ENCODE measurements at regions of chrX and their contacts with region 1.

Region 1: DNA sequence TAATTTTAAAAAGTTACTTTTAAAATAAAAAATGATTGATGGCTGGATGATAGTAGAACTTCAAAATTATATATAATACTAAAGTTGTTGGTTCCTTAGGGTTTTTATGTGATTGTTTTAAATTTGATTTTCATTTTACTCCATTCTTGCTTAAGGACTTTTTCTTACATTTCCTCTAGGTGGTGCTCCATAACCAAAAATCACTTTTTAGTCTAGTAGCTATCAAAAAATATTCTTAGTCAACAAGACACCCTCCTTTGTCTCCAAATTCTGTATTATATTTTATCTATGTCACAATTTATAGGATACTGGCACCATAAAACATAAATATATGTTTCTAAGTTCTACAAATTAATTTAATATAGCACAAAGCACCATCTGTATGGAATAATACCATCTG is 67.2 kb upstream of the BRWD3 start:
- DNase-seq: no peak
- H3K4me3 Mint-ChIP-seq: no peak overlapping the region
- H3K27ac Mint-ChIP-seq: no peak overlapping the region
- H3K4me1 Mint-ChIP-seq: no peaks in the 10 kb centered on the region
- H3K27me3 Mint-ChIP-seq: no peaks in the 10 kb centered on the region

Region 2: DNA sequence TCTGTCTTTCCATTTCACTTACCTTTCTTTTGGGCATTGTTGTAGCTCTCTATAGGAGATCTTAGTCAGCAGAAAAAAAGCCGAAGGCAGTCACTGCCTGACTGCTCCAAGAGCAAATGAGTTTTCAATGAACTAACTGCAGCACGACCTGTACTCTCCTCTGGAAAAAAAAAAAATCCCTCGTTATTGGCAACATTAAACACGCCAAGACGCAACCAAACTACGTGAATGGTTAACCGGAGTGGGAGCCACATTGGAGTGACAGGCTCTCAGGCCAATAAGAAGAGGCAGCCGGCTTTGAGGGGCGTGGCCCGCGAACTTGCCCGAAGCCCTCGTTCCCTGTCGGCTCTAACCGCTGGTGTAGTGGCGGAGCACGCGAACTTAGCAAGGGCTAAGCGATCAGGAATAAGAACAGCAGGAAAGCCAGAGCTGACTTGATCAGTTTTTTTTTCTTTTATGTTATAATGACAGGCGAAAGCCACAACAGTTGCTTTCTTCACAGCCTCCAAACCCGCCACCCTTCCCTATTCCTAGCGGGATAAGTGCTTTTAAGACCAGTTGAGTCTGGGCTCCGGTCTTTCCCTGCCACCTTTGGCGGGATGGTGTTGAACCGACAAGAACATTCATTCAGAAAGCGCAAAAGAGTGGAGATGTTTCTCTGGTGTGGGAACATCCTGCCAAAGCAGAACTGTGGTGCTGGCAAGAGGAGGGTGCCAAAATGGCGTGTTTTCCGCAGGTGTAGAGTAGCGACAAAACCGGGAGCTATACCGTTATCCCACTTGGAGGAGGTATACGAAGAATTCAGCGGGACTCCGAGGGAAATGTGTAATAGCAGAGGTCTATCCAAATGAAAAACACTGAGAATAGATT is 244.9 kb after region 1 on chrX:
- intact Hi-C with region 1: loop called (anchors 2 kb)
- DNase-seq: peak; percentile 78
- H3K4me3 Mint-ChIP-seq: peak overlapping the region; percentile 94
- H3K27ac Mint-ChIP-seq: peak overlapping the region; percentile 76
- H3K4me1 Mint-ChIP-seq: peaks cover 18% of the 10 kb centered on the region
- H3K27me3 Mint-ChIP-seq: peaks cover 9% of the 10 kb centered on the region

Region 3: DNA sequence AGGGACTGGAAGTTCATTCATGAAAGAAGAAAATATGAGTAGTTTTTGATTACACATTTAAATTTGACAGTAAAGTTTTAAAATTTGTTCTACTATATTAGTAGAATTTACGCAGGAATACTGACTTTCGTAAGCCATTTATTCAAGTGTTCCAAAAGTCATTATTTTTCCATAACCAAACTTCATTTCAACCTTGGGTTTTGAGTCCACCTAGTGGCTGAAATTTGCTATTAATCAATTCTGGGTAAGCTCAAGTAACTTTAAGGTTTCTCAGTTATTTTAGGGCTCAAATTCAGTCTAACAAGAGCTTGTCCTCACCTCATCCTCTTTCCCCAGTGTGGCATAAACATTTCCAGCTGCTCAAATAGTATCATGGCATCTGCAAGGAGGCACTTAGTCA is 500.5 kb after region 1 on chrX:
- intact Hi-C with region 1: loop called (anchors 2 kb)
- DNase-seq: no peak
- H3K4me3 Mint-ChIP-seq: no peak overlapping the region
- H3K27ac Mint-ChIP-seq: no peak overlapping the region
- H3K4me1 Mint-ChIP-seq: no peaks in the 10 kb centered on the region
- H3K27me3 Mint-ChIP-seq: peaks cover 2% of the 10 kb centered on the region

Measured in activated T-helper 1 cell treated with anti-CD3 and anti-CD28 coated beads, Interleukin-12 subunit alpha, Interleukin-12 subunit beta, Interleukin-2, Interleukin-4 antibody, amounts not matched to agents 30 ng/mL and 10 ng/mL and 1 ng/mL, durations not matched to agents 14 hours and 24 hours and 36 hours (primary cell).